AG04449 (cell line): ENCODE measurements at regions of chr2 and their contacts with region 1.

Region 1: DNA sequence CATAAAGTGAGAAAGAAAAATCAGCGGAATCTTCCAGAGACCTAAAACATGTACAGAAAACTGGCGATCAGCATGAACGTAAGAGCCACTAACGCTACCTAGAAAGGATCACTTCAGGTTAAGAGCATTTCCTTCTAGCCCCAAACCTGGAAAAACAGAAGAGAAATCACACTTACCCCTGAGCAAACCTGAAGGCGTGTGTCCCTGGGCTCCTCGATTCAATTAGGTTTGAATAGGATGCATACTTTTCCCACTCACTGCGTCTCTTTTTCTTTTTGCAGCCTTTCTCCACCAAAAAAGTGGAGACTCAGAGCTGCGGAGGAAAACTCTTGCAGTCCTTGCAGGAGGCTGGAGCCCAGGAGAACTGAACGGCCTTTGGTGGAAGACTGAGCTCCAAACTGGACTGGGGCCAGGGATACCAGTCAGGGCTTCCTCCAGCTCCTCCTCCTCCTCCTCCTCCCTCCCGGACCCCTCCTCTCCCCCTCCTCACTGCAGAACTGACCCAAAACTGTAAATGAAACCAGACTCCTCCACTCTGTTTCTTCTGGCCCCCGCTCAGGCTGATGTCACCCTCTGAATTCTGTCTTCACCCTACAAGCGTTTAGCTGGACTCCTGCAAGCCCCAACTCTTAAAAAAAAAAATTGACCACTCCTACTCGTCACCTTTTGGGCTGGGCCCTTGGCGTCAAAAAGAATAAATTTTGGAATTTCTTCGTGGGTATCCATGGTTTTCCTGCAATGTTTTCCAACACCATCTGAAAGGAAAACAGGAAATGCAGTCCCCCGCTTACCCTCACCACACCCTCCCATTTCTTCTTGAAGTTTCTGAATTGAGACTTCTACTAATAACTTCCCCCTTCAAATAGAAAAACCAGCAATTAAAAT is at the start of gene COL6A3:
- DNase-seq: peak; percentile 81
- H3K4me3 ChIP-seq: peak within 1 kb of the TSS; percentile 95
- CTCF ChIP-seq: no peak

Region 2: GRCh38 chr2:237154082-237154638 is 259.9 kb before region 1 on chr2:
- CTCF ChIA-PET with region 1: interaction called, 17 read pairs
- POLR2A ChIA-PET with region 1: interaction called, 4 read pairs
- DNase-seq: no peak
- H3K4me3 ChIP-seq: no peak overlapping the region
- CTCF ChIP-seq: peak; percentile 71

Region 3: DNA sequence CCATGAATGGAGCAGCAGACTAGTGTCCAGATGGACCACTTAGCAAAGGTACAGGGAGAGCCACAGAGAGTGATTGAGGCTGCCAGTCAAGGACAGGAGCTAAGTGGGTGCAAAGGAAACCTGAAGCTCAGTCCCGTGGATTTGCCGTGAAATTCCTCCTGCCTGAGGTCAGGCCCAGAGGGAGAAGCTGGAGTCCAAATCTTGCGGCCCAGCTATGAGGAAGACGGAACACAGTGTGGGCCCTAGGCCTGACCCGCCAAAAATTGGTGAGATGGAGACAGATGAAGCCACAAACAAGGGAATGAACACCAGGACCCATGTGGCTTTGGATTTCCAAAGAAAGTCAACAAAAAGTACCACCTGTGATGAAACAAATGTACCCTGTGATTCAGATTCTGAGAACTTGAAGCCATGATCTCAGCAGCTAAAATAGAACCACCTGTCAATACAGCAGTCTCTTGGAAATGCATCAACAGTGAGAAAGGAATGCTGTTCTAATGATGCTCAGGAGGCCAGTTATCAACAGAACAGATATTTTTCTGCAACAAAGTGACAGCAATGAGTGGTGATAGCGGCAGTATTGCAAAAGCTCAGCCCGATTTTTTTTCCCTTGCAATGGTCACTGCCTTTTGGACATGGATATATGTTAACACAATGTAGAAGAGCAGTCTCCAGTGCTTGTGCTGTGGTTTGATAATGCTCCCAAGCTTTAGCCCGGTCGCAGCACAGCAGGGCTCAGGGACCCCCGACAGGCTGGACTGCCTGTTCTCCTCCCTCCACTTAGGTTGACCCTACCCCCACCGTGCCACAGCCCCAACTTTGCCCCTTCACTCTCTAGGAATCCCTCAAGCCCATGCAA is 10.8 kb before region 1 on chr2:
- CTCF ChIA-PET with region 1: interaction called, 26 read pairs
- POLR2A ChIA-PET with region 1: interaction called, 9 read pairs
- DNase-seq: no peak
- H3K4me3 ChIP-seq: no peak overlapping the region
- CTCF ChIP-seq: no peak

Region 4: GRCh38 chr2:237441605-237442274 is 27.7 kb after region 1 on chr2:
- CTCF ChIA-PET with region 1: interaction called, 200 read pairs
- POLR2A ChIA-PET with region 1: interaction called, 14 read pairs
- DNase-seq: peak; percentile 38
- H3K4me3 ChIP-seq: no peak overlapping the region
- CTCF ChIP-seq: no peak

Region 5: DNA sequence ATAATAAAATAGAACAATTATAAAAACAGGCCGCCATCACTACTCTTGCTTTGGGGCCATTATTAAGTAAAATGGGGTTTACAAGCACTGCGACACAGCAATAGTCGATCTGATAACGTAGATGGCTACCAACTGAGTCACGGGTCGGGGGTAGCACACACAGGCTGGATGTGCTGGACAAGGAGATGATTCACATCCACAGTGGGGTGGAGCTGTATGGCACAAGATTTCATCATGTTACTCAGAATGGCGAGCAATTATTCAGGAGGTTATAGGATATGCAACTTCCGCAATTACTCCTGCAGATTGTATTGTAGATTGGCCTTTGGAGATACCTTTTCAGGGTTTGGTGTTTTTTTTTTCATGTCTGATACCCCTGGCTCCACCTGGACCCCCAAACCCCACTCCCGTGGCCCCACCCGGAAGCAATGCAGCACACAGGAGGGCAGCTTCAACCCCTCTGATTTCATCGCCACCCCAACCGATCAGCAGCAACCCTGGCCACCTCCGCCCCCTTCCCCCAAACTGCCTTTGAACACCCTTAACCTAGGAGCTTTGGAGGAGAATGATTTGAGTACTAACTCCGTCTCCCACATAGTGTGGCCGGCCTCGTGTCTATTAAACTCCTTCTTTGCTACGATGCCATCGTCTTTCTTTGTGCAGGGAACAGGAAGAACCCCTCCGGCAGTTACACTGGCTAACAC is 51.6 kb after region 1 on chr2:
- CTCF ChIA-PET with region 1: interaction called, 111 read pairs
- POLR2A ChIA-PET with region 1: interaction called, 14 read pairs
- DNase-seq: peak; percentile 95
- H3K4me3 ChIP-seq: no peak overlapping the region
- CTCF ChIP-seq: no peak

Region 6: DNA sequence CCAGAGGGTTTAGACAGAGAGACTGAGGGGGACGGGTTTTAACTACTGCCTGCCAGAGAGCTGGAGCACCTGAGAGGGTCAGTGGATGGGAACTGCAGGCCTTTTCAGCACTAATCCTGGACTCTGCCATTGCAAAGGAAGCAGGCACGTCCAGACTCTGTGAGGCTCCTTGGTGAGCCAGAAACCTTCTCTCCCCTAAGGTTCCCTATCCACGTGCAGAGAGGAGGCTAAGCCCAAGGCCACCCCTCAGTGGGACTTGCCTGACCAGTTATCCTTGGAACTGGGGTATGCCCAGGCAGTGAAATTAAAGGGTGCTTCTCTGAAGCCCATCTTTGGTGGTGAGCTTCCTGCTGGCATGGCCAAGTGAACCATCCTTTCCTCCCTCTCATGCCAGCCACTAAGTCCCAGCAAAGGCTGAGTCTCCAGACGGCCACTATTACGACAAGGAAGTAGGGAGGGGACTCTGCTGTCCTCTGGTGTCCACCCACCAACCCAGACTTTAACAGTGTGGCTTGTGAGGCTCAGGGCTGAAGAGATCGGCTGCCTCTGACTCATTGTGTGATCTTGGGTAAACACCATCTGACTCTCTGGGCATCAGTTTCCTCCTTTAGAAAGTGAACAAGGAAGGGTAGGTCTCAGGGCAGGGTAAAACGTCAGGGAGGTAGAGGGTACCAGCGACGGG is 69.2 kb after region 1 on chr2:
- CTCF ChIA-PET with region 1: interaction called, 57 read pairs
- POLR2A ChIA-PET with region 1: interaction called, 8 read pairs
- DNase-seq: peak; percentile 57
- H3K4me3 ChIP-seq: no peak overlapping the region
- CTCF ChIP-seq: peak; percentile 59

Region 7: DNA sequence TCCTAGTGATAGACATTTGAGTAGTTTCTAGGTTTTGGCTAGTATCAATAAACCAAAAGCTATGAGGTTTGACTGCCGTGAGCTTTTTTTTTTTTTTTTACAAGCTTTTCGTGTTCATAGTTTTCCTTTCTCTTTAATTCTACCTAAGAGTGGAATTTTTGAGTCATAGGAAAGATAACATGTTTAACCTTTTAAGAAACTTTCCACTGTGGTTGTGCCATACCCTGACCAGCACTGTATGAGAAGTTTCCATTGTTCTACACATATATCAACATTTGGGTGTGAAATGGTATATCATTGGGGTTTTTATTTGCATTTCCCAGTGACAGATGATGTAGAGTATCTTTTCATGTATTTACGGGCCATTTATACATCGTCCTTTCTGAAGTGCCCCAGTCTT is 584.5 kb after region 1 on chr2:
- CTCF ChIA-PET with region 1: no interaction called
- POLR2A ChIA-PET with region 1: no interaction called
- DNase-seq: no peak
- H3K4me3 ChIP-seq: no peak overlapping the region
- CTCF ChIP-seq: no peak